ENCODE measurements at regions of chr21 and their contacts with region 1.

Region 1: DNA sequence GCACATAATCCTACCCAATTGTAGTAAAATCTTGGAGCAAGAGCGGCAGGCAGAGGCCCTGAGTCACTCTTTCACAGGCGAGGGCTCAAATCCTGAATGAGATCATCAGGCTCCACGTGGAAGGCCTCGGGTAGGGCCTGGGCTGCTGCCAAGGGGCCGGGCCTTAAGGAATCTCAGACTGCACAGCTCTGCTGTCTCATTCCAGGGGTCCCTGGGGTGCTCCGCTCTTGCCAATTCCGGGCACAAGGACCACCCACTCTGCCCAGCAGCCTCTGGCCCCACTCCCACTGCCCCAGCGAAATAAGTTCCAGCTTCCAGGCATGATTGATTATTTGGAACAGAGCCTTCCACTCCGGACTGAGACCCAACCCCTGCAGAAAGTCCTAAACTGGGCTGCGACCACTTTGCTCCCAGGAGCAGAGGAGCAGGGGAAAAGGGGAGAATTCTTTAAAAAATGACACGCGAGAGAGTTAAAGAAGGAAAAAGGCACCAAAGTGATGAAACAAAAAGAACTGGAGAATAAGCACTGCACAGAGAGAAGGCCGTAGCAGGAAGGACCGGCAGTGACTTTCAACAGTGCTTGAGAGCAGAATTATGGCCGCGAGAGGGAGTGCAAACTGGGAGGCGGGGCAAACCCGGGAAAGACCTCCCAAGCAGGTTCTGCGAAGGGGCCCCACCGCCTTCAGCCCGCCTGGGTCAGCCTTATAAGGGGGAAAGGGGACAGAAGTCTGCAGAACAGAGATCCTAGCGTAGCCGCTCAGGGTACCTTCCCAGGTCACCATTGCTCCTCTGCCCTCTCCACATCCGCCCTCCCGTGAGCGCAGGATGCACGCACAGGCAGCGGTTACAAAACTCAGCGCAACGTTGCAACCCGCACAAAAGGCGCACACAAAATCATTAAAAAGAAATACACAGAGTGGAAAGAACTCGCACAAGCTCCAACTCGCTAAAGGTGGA is 2.0 kb downstream of the ADAMTS1 start:
- DNase-seq: peak; percentile 46
- ATAC-seq: no peak
- H3K4me3 Mint-ChIP-seq: peak overlapping the region; percentile 58
- H3K27ac Mint-ChIP-seq: no peak overlapping the region
- H3K4me1 Mint-ChIP-seq: peaks cover 28% of the 10 kb centered on the region
- H3K27me3 Mint-ChIP-seq: peaks cover 68% of the 10 kb centered on the region

Region 2: GRCh38 chr21:26783466-26784195 is 59.6 kb before region 1 on chr21:
- CTCF ChIA-PET with region 1: no interaction called
- POLR2A ChIA-PET with region 1: no interaction called
- intact Hi-C with region 1: no loop called
- DNase-seq: no peak
- ATAC-seq: no peak
- H3K4me3 Mint-ChIP-seq: no peak overlapping the region
- H3K27ac Mint-ChIP-seq: no peak overlapping the region
- H3K4me1 Mint-ChIP-seq: no peaks in the 10 kb centered on the region
- H3K27me3 Mint-ChIP-seq: peaks cover 7% of the 10 kb centered on the region

Region 3: DNA sequence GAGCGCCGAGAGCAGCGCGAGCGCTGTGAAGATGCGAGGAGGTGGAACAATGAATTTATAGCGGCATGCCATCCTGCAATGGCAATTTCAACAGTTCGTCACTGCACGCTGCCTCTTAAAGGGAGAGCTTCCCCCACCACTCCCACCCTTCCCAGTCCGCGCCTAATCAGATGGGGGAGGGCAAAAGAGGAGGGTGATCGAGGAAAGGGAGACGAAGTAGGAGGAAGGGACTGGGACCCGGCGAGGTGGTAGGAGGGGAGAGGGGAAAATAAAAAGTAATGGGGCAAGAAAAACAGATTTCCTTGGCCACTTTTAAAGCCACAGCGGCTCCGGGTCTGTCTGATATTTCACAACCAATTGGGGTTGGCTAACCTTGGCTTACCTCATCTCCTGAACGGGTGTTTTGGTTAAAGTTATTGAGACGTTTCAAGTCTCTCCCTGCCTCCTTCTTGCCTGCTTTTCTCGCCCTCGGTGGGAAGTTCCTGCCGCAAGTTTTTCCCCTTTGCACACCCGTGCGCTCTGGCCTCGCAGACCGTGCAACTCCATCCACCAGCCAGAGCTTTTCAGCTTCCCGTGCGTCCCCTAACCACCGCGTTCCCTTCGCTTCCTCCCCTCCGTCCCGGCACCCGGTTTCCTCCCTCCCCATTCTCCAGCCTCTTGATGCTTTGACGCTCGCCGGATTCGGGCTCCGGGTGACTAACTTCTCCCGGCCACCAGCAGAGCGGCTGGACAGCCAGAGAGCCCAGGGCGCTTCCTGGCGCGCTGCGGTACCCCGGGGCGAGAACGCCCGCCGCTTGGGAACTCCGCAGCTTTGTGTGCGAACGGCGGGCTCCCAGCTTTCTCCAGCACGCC is 124.0 kb after region 1 on chr21 and contains the start of gene ADAMTS5:
- CTCF ChIA-PET with region 1: no interaction called
- POLR2A ChIA-PET with region 1: no interaction called
- intact Hi-C with region 1: loop called in 1 of 2 experiments (anchors 5 kb)
- DNase-seq: peak; percentile 6
- ATAC-seq: no peak
- H3K4me3 Mint-ChIP-seq: no peak within 1 kb of the TSS
- H3K27ac Mint-ChIP-seq: no peak within 1 kb of the TSS
- H3K4me1 Mint-ChIP-seq: peaks cover 3% of the 10 kb centered on the region
- H3K27me3 Mint-ChIP-seq: peaks cover 43% of the 10 kb centered on the region
- total RNA-seq, gene ADAMTS5: not detected

Region 4: GRCh38 chr21:27802816-27803475 is 959.7 kb after region 1 on chr21:
- CTCF ChIA-PET with region 1: no interaction called
- POLR2A ChIA-PET with region 1: no interaction called
- intact Hi-C with region 1: loop called in 1 of 2 experiments (anchors 5 kb)
- DNase-seq: peak; percentile 41
- ATAC-seq: peak; percentile 53
- H3K4me3 Mint-ChIP-seq: no peak overlapping the region
- H3K27ac Mint-ChIP-seq: no peak overlapping the region
- H3K4me1 Mint-ChIP-seq: no peaks in the 10 kb centered on the region
- H3K27me3 Mint-ChIP-seq: no peaks in the 10 kb centered on the region

Region 5: GRCh38 chr21:28063241-28064216 is 1220.3 kb after region 1 on chr21:
- CTCF ChIA-PET with region 1: no interaction called
- POLR2A ChIA-PET with region 1: no interaction called
- intact Hi-C with region 1: loop called in 1 of 2 experiments (anchors 10 kb)
- DNase-seq: no peak
- ATAC-seq: no peak
- H3K4me3 Mint-ChIP-seq: no peak overlapping the region
- H3K27ac Mint-ChIP-seq: no peak overlapping the region
- H3K4me1 Mint-ChIP-seq: no peaks in the 10 kb centered on the region
- H3K27me3 Mint-ChIP-seq: no peaks in the 10 kb centered on the region

Region 6: GRCh38 chr21:28336314-28336713 is 1493.1 kb after region 1 on chr21:
- CTCF ChIA-PET with region 1: no interaction called
- POLR2A ChIA-PET with region 1: no interaction called
- intact Hi-C with region 1: loop called (anchors 2 to 5 kb)
- DNase-seq: no peak
- ATAC-seq: no peak
- H3K4me3 Mint-ChIP-seq: no peak overlapping the region
- H3K27ac Mint-ChIP-seq: no peak overlapping the region
- H3K4me1 Mint-ChIP-seq: no peaks in the 10 kb centered on the region
- H3K27me3 Mint-ChIP-seq: no peaks in the 10 kb centered on the region

Region 7: GRCh38 chr21:28516991-28517592 is 1673.8 kb after region 1 on chr21:
- CTCF ChIA-PET with region 1: no interaction called
- POLR2A ChIA-PET with region 1: no interaction called
- intact Hi-C with region 1: loop called in 1 of 2 experiments (anchors 10 kb)
- DNase-seq: peak; percentile 80
- ATAC-seq: peak; percentile 97
- H3K4me3 Mint-ChIP-seq: no peak overlapping the region
- H3K27ac Mint-ChIP-seq: no peak overlapping the region
- H3K4me1 Mint-ChIP-seq: no peaks in the 10 kb centered on the region
- H3K27me3 Mint-ChIP-seq: no peaks in the 10 kb centered on the region